ENCODE measurements at regions of chr2 and their contacts with region 1.

Region 1: DNA sequence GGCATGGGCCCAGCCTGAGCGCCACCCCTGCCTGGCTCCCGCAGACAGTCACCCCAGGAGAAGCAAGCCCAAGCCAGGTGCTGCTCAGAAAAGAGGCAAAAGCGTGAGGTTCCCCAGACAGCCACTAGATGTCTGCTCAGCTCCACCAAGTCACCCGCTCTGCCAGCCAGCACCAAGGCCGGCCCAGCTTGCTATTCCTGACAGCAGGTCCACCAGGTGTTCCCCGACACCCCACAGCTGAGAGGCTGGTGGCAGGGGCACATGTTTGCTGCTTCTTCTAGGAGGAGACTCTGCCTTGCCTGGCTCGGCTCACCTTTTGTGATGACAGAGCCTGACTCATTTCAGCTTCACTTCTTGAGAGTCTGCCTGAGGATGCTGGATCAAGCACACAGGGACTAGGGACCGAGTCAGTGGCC is 206.7 kb downstream of the MGAT5 start:
- DNase-seq: peak; percentile 66
- ATAC-seq: peak; percentile 92

Region 2: GRCh38 chr2:134189009-134189720 is 271.4 kb before region 1 on chr2:
- intact Hi-C with region 1: no loop called
- DNase-seq: no peak
- ATAC-seq: peak; percentile 8

Region 3: DNA sequence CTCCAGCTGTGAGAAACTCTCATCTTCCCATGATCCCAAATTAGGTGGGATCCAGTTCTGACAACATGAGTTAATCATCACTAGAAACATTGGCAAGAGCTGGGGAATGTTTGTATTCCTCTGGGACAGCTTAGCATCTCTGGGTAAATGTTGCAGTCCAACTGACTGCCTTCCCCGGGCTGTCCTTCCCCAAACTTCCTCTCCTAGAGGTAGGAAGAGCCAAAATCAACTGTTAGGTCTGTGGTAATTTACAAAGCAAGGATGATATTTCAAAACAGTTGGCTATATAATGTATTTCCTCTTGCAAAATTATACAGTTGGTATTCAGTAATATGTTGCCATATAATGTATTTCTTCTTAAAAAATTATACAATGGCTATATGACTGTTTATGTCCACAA is 58.2 kb before region 1 on chr2:
- intact Hi-C with region 1: no loop called
- DNase-seq: peak; percentile 56
- ATAC-seq: peak; percentile 78

Region 4: GRCh38 chr2:134522496-134523455 is 62.2 kb after region 1 on chr2:
- intact Hi-C with region 1: no loop called
- DNase-seq: no peak
- ATAC-seq: no peak

Region 5: GRCh38 chr2:134762508-134762907 is 301.9 kb after region 1 on chr2:
- intact Hi-C with region 1: loop called (anchors 10 kb)
- DNase-seq: no peak
- ATAC-seq: no peak

Region 6: GRCh38 chr2:134897932-134898331 is 437.3 kb after region 1 on chr2:
- intact Hi-C with region 1: loop called (anchors 5 kb)
- DNase-seq: no peak
- ATAC-seq: no peak

Measured in Right ventricle myocardium superior (tissue), 1 donor.